Endothelial cell of umbilical vein (primary cell): ENCODE measurements at regions of chr2 and their contacts with region 1.

Region 1: GRCh38 chr2:209334198-209335017 is 89.4 kb upstream of the MAP2 start:
- DNase-seq: peak; percentile 69
- H3K4me3 ChIP-seq: no peak overlapping the region
- H3K27ac ChIP-seq: no peak overlapping the region
- H3K4me1 ChIP-seq: no peaks in the 10 kb centered on the region
- H3K27me3 ChIP-seq: peaks cover 1 to 2% of the 10 kb centered on the region in 2 experiments
- CTCF ChIP-seq: peak; percentile 73 to 78
- POLR2A ChIP-seq: no peak

Region 2: DNA sequence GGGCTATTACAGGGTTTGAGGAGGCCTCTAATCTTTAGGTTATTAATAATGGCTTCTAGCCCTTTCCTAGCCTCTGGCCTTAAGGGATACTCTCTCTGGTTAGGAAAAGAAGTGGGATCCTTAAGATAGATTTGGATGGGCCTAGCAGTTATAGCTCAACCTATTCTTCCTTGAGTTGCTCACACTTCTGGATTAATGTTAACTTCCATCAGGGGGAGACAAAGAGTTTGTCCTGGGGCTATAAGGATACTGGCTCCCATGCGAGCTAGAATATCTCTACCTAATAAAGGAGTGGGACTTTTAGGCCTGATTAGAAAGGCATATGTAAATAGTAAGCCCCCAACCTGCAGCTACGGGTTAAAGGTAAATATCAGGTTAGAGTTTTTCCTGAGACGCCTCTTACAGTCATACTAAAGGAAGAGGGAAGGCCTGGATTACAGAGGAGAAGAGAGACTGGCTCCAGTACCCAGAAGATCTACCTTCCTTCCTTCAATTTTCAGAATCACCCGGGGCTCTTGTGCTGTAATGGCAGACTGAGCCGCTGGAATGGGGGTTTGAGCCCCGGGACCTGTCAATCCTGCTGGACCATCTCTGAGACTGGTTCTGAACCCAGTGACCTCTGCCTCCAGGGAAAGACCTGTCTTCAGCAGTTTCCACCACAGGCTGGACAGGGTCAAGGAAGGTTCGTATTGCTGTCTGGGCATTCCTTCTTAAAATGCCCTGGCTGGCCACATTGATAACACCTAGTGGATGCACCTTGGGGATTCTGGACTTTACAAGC is 941.9 kb before region 1 on chr2:
- CTCF ChIA-PET with region 1: interaction called, 49 read pairs
- POLR2A ChIA-PET with region 1: no interaction called
- dilution Hi-C with region 1: no loop called
- intact Hi-C with region 1: loop called (anchors 1 kb)
- DNase-seq: no peak
- H3K4me3 ChIP-seq: no peak overlapping the region
- H3K27ac ChIP-seq: no peak overlapping the region
- H3K4me1 ChIP-seq: no peaks in the 10 kb centered on the region
- H3K27me3 ChIP-seq: no peaks in the 10 kb centered on the region
- CTCF ChIP-seq: peak in 1 of 2 donors; percentile 4
- POLR2A ChIP-seq: no peak

Region 3: DNA sequence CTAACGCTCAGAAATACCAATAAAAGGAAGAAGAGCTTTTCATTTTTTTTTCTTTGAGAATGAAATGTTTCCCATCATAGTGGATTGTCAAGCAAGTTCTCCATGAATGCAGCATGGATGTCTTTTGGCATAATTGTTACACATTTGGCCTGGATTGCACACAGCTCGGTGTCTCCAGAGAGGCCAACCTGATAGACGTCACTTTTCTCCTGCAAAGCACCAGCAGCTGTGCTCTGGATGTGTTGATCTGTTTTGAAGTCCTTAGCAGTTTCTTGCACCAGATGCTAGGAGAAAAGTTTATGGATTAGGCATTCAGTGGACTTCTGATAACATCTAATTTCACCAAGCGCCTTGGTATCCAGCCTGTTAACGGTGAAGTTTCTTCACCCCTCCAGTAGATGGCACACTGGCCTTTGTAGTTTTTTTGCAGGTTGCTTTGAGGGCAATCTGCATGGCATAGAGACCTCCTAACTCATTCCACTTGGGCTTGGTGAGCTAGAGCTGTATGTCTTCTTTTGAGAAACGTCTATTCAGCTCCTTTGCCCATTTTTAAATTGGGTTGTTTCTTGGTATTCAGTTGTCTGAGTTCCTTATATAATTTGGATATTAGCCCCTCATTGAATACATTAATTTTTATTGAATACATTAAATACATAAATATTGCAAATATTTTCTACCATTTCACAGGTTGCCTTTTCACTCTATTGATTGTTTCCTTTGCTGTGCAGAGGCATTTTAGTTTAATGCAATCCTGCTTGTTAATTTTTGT is 868.1 kb before region 1 on chr2:
- CTCF ChIA-PET with region 1: interaction called, 23 read pairs
- POLR2A ChIA-PET with region 1: no interaction called
- dilution Hi-C with region 1: no loop called
- intact Hi-C with region 1: loop called (anchors 2 kb)
- DNase-seq: peak; percentile 3
- H3K4me3 ChIP-seq: no peak overlapping the region
- H3K27ac ChIP-seq: no peak overlapping the region
- H3K4me1 ChIP-seq: no peaks in the 10 kb centered on the region
- H3K27me3 ChIP-seq: no peaks in the 10 kb centered on the region
- CTCF ChIP-seq: peak; percentile 34 to 41
- POLR2A ChIP-seq: no peak

Region 4: GRCh38 chr2:209348433-209348832 is 14.0 kb after region 1 on chr2:
- CTCF ChIA-PET with region 1: interaction called, 35 read pairs
- POLR2A ChIA-PET with region 1: no interaction called
- dilution Hi-C with region 1: no loop called
- intact Hi-C with region 1: no loop called
- DNase-seq: no peak
- H3K4me3 ChIP-seq: no peak overlapping the region
- H3K27ac ChIP-seq: no peak overlapping the region
- H3K4me1 ChIP-seq: no peaks in the 10 kb centered on the region
- H3K27me3 ChIP-seq: no peaks in the 10 kb centered on the region
- CTCF ChIP-seq: no peak
- POLR2A ChIP-seq: no peak

Region 5: GRCh38 chr2:209368900-209369299 is 34.5 kb after region 1 on chr2:
- CTCF ChIA-PET with region 1: interaction called, 28 read pairs
- POLR2A ChIA-PET with region 1: no interaction called
- dilution Hi-C with region 1: no loop called
- intact Hi-C with region 1: no loop called
- DNase-seq: peak; percentile 96
- H3K4me3 ChIP-seq: no peak overlapping the region
- H3K27ac ChIP-seq: peak overlapping the region; percentile 4
- H3K4me1 ChIP-seq: peaks cover 23% of the 10 kb centered on the region
- H3K27me3 ChIP-seq: no peaks in the 10 kb centered on the region
- CTCF ChIP-seq: no peak
- POLR2A ChIP-seq: no peak

Region 6: DNA sequence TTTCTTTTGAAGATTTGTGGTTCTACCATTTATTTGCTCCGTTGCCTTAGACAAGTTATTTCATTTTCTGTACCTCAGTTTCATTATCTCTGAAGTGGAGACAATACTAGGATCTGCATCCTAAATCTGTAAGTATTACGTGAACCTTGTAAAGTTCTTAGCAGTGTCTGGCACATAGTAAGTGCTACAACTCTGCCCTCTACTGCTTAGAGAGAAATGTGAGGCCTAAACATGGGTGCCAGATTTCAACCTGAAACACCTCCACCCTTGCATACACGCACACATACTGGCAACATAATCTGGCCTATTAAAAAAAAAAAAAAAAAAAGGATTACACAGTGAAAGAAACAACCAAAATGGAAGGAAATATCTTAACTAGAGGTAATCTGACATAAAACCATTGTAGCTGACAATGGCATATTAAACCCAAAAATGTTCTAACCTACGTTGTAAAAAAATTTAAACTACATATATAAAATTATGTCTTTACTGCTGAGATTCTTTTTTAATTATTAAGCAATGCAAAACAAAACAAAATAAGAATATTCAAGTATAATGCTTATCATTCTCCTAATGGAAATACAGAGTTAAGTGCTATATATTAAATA is 222.1 kb after region 1 on chr2:
- CTCF ChIA-PET with region 1: interaction called, 63 read pairs
- POLR2A ChIA-PET with region 1: no interaction called
- dilution Hi-C with region 1: no loop called
- intact Hi-C with region 1: loop called (anchors 1 kb)
- DNase-seq: peak; percentile 70
- H3K4me3 ChIP-seq: no peak overlapping the region
- H3K27ac ChIP-seq: no peak overlapping the region
- H3K4me1 ChIP-seq: no peaks in the 10 kb centered on the region
- H3K27me3 ChIP-seq: no peaks in the 10 kb centered on the region
- CTCF ChIP-seq: peak; percentile 48 to 57
- POLR2A ChIP-seq: no peak

Region 7: GRCh38 chr2:209876211-209876610 is 541.8 kb after region 1 on chr2:
- CTCF ChIA-PET with region 1: no interaction called
- POLR2A ChIA-PET with region 1: no interaction called
- dilution Hi-C with region 1: no loop called
- intact Hi-C with region 1: no loop called
- DNase-seq: no peak
- H3K4me3 ChIP-seq: no peak overlapping the region
- H3K27ac ChIP-seq: no peak overlapping the region
- H3K4me1 ChIP-seq: no peaks in the 10 kb centered on the region
- H3K27me3 ChIP-seq: no peaks in the 10 kb centered on the region
- CTCF ChIP-seq: no peak
- POLR2A ChIP-seq: no peak

Region 8: GRCh38 chr2:209960676-209961630 is 626.5 kb after region 1 on chr2:
- CTCF ChIA-PET with region 1: interaction called, 27 read pairs
- POLR2A ChIA-PET with region 1: no interaction called
- dilution Hi-C with region 1: no loop called
- intact Hi-C with region 1: loop called (anchors 1 kb)
- DNase-seq: peak; percentile 65
- H3K4me3 ChIP-seq: no peak overlapping the region
- H3K27ac ChIP-seq: no peak overlapping the region
- H3K4me1 ChIP-seq: no peaks in the 10 kb centered on the region
- H3K27me3 ChIP-seq: peaks cover 2 to 8% of the 10 kb centered on the region in 2 experiments
- CTCF ChIP-seq: peak; percentile 57 to 64
- POLR2A ChIP-seq: no peak